Heart right ventricle (tissue), 16 donors: ENCODE measurements at regions of chr1 and their contacts with region 1.

Region 1: GRCh38 chr1:113255720-113256347 is 134.5 kb upstream of the MAGI3 start:
- DNase-seq: no peak
- ATAC-seq: no peak
- H3K4me3 ChIP-seq: no peak overlapping the region
- H3K27ac ChIP-seq: no peak overlapping the region
- H3K4me1 ChIP-seq: peaks cover 0 to 10% (median 2%) of the 10 kb centered on the region in 9 donors
- H3K27me3 ChIP-seq: peaks cover 0 to 27% (median 0%) of the 10 kb centered on the region in 7 donors
- CTCF ChIP-seq: no peak

Region 2: DNA sequence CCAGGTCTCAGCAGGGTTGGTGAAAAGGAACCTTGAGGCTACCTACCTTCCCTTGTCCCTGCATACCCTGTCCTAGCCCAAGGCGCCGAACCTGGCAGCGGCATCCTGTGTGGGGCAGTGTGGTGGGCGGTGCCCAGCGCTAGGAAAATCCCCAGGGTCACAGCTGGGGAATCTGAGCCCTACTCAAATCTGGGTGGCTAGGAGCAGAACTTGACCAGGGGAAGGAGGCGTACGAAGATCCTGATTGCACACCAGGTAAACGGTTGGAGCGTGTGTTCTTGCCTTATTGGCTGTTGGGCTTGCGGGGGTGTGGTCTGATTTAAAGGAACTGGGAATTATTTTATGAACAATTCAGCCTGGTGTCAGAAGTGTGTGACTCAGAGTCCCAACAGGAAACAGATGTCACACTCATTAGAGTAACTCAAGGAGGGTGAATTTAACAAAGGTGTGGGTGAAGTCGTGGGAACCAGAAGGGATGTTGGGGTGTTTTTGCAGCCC is 64.2 kb before region 1 on chr1:
- intact Hi-C with region 1: no loop called
- DNase-seq: no peak
- ATAC-seq: peak in 6 of 8 donors; percentile 19 to 78 (median 44)
- H3K4me3 ChIP-seq: no peak overlapping the region
- H3K27ac ChIP-seq: no peak overlapping the region
- H3K4me1 ChIP-seq: peaks cover 0 to 6% (median 0%) of the 10 kb centered on the region in 9 donors
- H3K27me3 ChIP-seq: peaks cover 0 to 1% (median 0%) of the 10 kb centered on the region in 7 donors
- CTCF ChIP-seq: no peak

Region 3: GRCh38 chr1:113207019-113207418 is 48.8 kb before region 1 on chr1:
- intact Hi-C with region 1: no loop called
- DNase-seq: no peak
- ATAC-seq: no peak
- H3K4me3 ChIP-seq: no peak overlapping the region
- H3K27ac ChIP-seq: no peak overlapping the region
- H3K4me1 ChIP-seq: no peaks in the 10 kb centered on the region
- H3K27me3 ChIP-seq: peaks cover 0 to 26% (median 17%) of the 10 kb centered on the region in 7 donors
- CTCF ChIP-seq: no peak

Region 4: DNA sequence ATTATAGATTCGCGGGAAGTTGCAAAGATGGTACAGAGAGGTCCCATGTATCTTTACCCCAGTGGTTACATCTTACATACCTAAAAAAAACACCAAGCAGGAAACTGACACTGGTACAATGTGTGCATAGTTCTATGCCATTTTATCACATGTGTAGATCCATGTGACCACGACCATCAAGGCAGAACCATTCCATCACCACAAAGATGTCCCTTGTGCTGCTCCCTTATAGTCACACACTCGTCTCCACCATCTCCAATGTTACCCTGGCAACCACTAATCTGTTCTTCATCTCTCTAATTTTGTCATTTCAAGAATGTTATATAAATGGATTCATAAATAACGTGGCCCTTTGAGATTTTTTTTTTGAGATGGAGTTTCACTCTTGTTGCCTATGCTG is 22.4 kb before region 1 on chr1:
- intact Hi-C with region 1: loop called in 1 of 10 experiments (anchors 2 kb)
- DNase-seq: no peak
- ATAC-seq: no peak
- H3K4me3 ChIP-seq: no peak overlapping the region
- H3K27ac ChIP-seq: no peak overlapping the region
- H3K4me1 ChIP-seq: no peaks in the 10 kb centered on the region
- H3K27me3 ChIP-seq: peaks cover 0 to 3% (median 0%) of the 10 kb centered on the region in 7 donors
- CTCF ChIP-seq: no peak

Region 5: DNA sequence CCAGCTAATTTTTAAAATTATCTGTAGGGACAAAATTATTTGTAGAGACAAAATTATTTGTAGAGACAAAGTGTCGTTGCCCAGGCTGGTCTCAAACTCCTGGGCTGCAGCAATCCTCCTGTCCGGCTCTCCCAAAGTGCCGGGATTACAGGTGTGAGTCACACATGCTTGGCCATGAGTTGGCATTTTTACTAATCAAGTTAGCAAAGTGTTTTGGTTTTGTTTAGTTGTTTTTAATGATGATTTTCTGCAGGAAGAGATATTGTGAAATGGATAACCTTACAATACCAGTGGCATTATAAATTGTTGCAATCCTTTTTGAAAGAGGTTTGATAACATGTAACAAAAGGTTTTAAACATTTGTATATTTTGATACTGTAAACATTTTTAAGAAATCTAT is 69.2 kb after region 1 on chr1:
- intact Hi-C with region 1: no loop called
- DNase-seq: no peak
- ATAC-seq: no peak
- H3K4me3 ChIP-seq: no peak overlapping the region
- H3K27ac ChIP-seq: no peak overlapping the region
- H3K4me1 ChIP-seq: peaks cover 0 to 7% (median 0%) of the 10 kb centered on the region in 9 donors
- H3K27me3 ChIP-seq: no peaks in the 10 kb centered on the region
- CTCF ChIP-seq: no peak